ENCODE measurements at regions of chr15 and their contacts with region 1.

Region 1: DNA sequence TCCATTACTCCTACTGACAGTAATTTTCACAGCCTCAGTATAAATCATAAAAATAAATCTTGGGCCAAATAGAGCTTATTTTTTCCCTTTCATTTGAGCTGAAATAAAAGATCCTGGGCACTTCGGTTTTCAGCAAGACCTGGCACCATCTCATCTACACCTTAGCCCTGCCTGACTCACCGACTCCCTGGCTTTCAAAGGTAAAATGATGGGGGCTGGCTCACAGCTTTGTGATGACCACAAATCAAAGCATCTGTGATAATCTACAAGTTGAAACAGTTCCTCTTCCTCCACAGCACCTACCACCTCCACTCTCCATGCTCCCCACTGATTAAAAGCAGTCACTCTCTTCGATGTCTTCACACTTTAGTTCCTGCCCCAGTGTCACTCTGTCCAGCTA is 27.6 kb downstream of the DET1 start:
- DNase-seq: no peak
- ATAC-seq: no peak
- H3K4me3 ChIP-seq: no peak overlapping the region
- H3K27ac ChIP-seq: no peak overlapping the region
- H3K4me1 ChIP-seq: no peaks in the 10 kb centered on the region
- H3K27me3 ChIP-seq: no peaks in the 10 kb centered on the region
- CTCF ChIP-seq: no peak

Region 2: DNA sequence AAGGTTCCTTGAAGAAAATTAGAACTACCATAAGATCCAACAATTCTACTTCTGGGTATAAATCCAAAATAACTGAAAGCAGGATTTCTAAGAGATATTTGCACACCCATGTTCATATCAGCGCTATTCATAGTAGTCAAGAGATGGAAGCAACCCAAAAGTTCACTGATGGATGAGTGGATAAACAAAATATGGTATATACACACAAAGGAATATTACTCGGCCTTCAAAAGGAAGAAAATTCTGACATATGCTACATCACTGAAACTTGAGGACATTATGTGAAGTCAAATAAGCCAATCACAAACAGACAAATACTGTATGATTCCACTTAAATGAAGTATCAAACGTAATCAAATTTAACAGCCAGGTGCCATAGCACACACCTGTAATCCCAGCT is 14.5 kb after region 1 on chr15:
- CTCF ChIA-PET with region 1: no interaction called
- POLR2A ChIA-PET with region 1: interaction called, 11 read pairs
- in situ Hi-C with region 1: no loop called
- intact Hi-C with region 1: no loop called
- DNase-seq: no peak
- ATAC-seq: no peak
- H3K4me3 ChIP-seq: no peak overlapping the region
- H3K27ac ChIP-seq: no peak overlapping the region
- H3K4me1 ChIP-seq: no peaks in the 10 kb centered on the region
- H3K27me3 ChIP-seq: no peaks in the 10 kb centered on the region
- CTCF ChIP-seq: no peak

Region 3: DNA sequence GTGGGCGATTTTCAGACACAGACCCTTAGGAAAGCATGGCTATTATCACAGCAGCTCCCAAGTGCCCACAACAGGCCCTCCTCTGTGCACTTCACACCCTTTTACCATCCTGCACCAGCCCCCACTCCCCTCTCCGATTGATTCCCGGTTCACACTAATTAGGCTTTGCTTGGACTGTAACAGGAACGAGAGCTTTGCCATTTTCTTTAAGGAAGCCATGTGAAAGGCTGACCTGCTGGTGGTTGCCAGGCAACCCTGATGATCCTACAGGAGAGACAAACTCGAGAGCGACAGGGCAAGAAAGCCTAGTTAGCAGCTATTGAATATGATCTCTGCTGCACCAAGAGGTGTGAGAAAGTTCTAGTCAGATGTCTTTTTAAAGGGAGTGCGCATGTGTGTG is 55.8 kb after region 1 on chr15:
- CTCF ChIA-PET with region 1: no interaction called
- POLR2A ChIA-PET with region 1: no interaction called
- in situ Hi-C with region 1: no loop called
- intact Hi-C with region 1: no loop called
- DNase-seq: no peak
- ATAC-seq: no peak
- H3K4me3 ChIP-seq: no peak overlapping the region
- H3K27ac ChIP-seq: no peak overlapping the region
- H3K4me1 ChIP-seq: no peaks in the 10 kb centered on the region; the same call in 1 of the 2 replicates
- H3K27me3 ChIP-seq: 0 out of 2 replicates have a peak, but pooled peaks cover 2% of the 10 kb centered on the region
- CTCF ChIP-seq: no peak

Region 4: GRCh38 chr15:88989578-88989977 is 470.7 kb after region 1 on chr15:
- CTCF ChIA-PET with region 1: no interaction called
- POLR2A ChIA-PET with region 1: no interaction called
- in situ Hi-C with region 1: no loop called
- intact Hi-C with region 1: no loop called
- DNase-seq: no peak
- ATAC-seq: peak; percentile 67
- H3K4me3 ChIP-seq: no peak overlapping the region
- H3K27ac ChIP-seq: peak overlapping the region; percentile 98
- H3K4me1 ChIP-seq: peaks cover 52% of the 10 kb centered on the region
- H3K27me3 ChIP-seq: no peaks in the 10 kb centered on the region
- CTCF ChIP-seq: no peak

Measured in Panc1 (cell line).